PC-3 (cell line): ENCODE measurements at regions of chr6 and their contacts with region 1.

Region 1: DNA sequence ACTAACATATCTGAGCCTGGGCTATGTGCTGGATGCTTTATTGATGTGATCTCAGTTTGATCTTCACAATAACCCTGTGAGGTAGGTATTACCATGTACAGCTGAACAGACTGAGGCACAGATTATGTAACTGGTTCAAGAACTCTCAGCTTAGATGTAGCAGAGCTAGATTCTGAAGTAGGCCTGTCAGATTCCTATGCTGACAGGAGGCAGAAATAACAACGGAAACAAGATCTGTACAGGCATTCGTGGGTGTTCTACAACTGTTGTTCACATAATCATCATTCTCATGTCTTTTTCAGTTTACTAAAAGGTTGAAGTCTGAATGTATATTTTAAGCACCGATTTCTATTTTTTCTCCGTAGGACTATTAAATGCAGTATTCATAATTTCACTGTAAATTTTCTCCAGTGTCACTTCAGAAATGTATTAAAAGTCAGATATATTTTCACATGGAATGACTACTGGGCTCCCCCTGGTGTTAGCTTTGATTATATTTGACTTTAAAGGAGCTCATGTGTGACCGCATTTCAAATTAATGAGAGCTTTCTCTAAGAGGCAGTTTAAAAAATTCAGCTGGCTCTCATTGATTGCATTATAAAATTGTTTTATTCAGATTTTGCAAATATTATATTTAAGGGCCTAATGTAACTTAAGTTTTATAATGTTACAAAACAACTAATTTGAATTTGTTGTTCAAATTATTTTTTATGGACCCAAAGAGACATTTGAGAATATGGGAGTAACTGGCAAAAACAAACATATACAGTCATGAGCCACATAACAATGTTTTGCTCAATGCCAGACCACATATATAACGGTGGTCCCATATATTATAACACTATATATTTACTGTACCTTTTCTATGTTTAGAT is 36.4 kb upstream of the SLC17A4 start:
- DNase-seq: peak; percentile 67
- ATAC-seq: no peak; the same call in 1 of the 2 replicates
- H3K4me3 ChIP-seq: no peak overlapping the region
- H3K27ac ChIP-seq: no peak overlapping the region
- H3K4me1 ChIP-seq: no peaks in the 10 kb centered on the region
- H3K27me3 ChIP-seq: peaks cover 40% of the 10 kb centered on the region
- CTCF ChIP-seq: peak; percentile 79

Region 2: GRCh38 chr6:25670793-25671513 is 47.1 kb before region 1 on chr6:
- CTCF ChIA-PET with region 1: interaction called, 20 read pairs
- POLR2A ChIA-PET with region 1: no interaction called
- intact Hi-C with region 1: loop called (anchors 2 kb)
- DNase-seq: peak; percentile 72
- ATAC-seq: peak; percentile 86
- H3K4me3 ChIP-seq: no peak overlapping the region
- H3K27ac ChIP-seq: no peak overlapping the region
- H3K4me1 ChIP-seq: peaks cover 10% of the 10 kb centered on the region
- H3K27me3 ChIP-seq: peaks cover 42% of the 10 kb centered on the region
- CTCF ChIP-seq: peak; percentile 41; the same call in 1 of the 2 replicates

Region 3: GRCh38 chr6:25889877-25890853 is 172.1 kb after region 1 on chr6:
- CTCF ChIA-PET with region 1: no interaction called
- POLR2A ChIA-PET with region 1: no interaction called
- intact Hi-C with region 1: loop called (anchors 1 kb)
- DNase-seq: peak; percentile 75
- ATAC-seq: peak; percentile 87
- H3K4me3 ChIP-seq: no peak overlapping the region
- H3K27ac ChIP-seq: no peak overlapping the region
- H3K4me1 ChIP-seq: peaks cover 11% of the 10 kb centered on the region
- H3K27me3 ChIP-seq: peaks cover 27% of the 10 kb centered on the region; the same call in 1 of the 2 replicates
- CTCF ChIP-seq: peak; percentile 81

Region 4: DNA sequence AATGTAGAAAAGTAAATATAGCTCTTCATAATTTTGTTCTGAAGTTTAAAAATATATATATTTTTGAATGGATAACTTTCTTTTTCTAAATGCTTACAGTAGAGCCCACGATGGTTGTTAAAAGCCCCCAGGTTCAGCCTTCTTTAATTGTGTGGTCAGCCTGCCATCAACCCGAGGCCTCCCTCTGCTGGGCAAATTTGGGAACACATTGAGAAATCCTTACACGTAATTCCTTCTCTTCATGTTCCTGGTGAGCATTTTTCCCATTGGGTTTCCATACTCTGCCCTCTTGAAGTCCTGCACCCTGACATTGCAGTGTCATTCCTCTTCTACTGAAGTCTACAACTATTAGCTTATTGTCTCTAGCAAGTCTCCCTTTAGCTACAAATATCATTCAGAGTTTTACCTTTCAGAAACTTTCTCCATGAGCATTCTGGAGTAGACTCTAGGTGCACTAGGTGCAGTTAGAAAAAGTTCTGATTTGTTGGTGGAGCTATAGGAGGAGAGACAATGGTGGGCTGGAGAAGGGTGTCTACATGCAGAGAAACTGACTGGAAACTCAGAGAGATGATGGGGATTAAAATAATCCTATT is 285.1 kb after region 1 on chr6:
- CTCF ChIA-PET with region 1: no interaction called
- POLR2A ChIA-PET with region 1: no interaction called
- intact Hi-C with region 1: loop called (anchors 2 kb)
- DNase-seq: peak; percentile 68
- ATAC-seq: peak; percentile 58
- H3K4me3 ChIP-seq: no peak overlapping the region
- H3K27ac ChIP-seq: no peak overlapping the region
- H3K4me1 ChIP-seq: peaks cover 5% of the 10 kb centered on the region; the same call in 1 of the 2 replicates
- H3K27me3 ChIP-seq: no peaks in the 10 kb centered on the region
- CTCF ChIP-seq: peak; percentile 81